ENCODE measurements at regions of chr12 and their contacts with region 1.

Region 1: GRCh38 chr12:123365025-123365917 is 624 bp upstream of the SBNO1 start:
- DNase-seq: peak; percentile 99
- H3K4me3 Mint-ChIP-seq: peak overlapping the region; percentile 90
- H3K27ac Mint-ChIP-seq: peak overlapping the region; percentile 99
- H3K4me1 Mint-ChIP-seq: peaks cover 14% of the 10 kb centered on the region
- H3K27me3 Mint-ChIP-seq: no peaks in the 10 kb centered on the region

Region 2: DNA sequence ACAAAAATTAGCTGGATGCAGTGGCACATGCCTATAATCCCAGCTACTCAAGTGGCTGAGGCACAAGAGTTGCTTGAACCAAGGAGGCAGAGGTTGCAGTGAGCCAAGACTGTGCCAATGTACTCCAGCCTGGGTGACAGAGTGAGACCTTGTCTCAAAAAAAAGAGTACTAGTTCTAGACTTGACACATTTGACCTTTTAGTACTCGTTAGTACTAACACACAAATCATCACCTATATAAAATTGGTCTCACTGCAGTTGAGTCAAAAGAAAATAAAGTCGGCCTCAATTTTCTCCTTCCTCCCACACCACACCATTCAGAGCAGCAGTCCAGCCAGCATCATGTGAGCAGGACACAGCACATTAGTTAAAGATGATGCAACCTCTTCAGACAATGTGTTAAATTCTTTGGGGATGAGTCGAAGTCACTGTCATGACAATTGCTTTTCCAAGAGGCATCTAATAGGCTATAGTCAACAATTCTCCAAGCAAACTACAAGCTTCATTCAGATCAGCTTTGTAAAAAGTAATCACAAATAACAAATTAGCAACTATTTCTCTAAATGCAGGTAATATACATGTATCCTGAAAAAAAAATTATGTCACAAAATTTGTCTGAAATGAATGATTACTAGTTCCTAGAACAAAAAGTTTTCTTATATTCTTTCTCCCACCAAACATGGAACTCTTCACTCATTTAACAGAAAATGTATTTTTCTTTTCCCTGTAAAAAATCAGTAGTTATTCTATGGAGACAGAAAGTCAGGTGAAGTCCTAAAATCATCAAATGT is 998.4 kb before region 1 on chr12:
- intact Hi-C with region 1: no loop called
- DNase-seq: no peak
- H3K4me3 Mint-ChIP-seq: no peak overlapping the region
- H3K27ac Mint-ChIP-seq: peak overlapping the region; percentile 46
- H3K4me1 Mint-ChIP-seq: peaks cover 18% of the 10 kb centered on the region
- H3K27me3 Mint-ChIP-seq: no peaks in the 10 kb centered on the region

Region 3: DNA sequence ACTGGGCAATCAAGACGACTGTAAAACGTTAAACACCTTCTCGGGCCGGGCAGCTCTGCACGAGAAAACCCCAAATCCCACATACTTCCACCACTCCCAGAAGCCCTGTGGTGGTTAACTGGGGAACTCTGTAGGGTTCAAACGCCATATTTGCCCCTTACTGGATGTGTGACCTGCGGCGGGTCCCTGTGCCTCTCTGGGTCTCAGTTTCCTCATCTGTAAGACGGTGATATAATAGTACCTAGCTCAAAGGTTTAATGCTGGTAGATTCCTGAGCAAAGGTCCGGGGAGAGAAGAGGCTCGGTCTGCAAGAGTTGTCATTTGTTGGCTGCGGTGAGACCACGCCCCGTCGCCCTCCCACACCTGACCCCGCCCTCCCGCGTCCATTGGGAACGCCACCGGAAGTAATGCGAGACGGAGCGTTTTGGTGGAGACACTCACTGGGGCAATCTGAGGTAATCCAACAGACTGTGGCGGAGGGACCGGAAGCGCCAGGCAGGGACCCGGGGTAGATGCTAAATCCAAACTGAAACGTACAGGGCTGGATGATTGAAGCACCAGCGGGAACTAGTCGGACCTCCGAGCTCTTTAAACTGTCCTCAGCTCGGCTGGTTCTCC is 390.9 kb before region 1 on chr12:
- intact Hi-C with region 1: loop called (anchors 10 kb)
- DNase-seq: peak; percentile 100
- H3K4me3 Mint-ChIP-seq: peak overlapping the region; percentile 94
- H3K27ac Mint-ChIP-seq: peak overlapping the region; percentile 99
- H3K4me1 Mint-ChIP-seq: peaks cover 19% of the 10 kb centered on the region
- H3K27me3 Mint-ChIP-seq: no peaks in the 10 kb centered on the region

Region 4: GRCh38 chr12:123232807-123233543 is 132.3 kb before region 1 on chr12 and contains the starts of genes MPHOSPH9 and MTRFR:
- intact Hi-C with region 1: loop called (anchors 2 kb)
- DNase-seq: peak; percentile 100
- H3K4me3 Mint-ChIP-seq: peak within 1 kb of the TSS; percentile 95
- H3K27ac Mint-ChIP-seq: peak within 1 kb of the TSS; percentile 99
- H3K4me1 Mint-ChIP-seq: peaks cover 48% of the 10 kb centered on the region
- H3K27me3 Mint-ChIP-seq: peaks cover 3% of the 10 kb centered on the region
- total RNA-seq, gene MPHOSPH9: 87.1 and 90.3 TPM in 2 replicates
- total RNA-seq, gene MTRFR: 30.3 and 30.5 TPM in 2 replicates

Region 5: GRCh38 chr12:123329799-123330198 is 35.5 kb before region 1 on chr12:
- intact Hi-C with region 1: no loop called
- DNase-seq: no peak
- H3K4me3 Mint-ChIP-seq: no peak overlapping the region
- H3K27ac Mint-ChIP-seq: no peak overlapping the region
- H3K4me1 Mint-ChIP-seq: no peaks in the 10 kb centered on the region
- H3K27me3 Mint-ChIP-seq: no peaks in the 10 kb centered on the region

Region 6: DNA sequence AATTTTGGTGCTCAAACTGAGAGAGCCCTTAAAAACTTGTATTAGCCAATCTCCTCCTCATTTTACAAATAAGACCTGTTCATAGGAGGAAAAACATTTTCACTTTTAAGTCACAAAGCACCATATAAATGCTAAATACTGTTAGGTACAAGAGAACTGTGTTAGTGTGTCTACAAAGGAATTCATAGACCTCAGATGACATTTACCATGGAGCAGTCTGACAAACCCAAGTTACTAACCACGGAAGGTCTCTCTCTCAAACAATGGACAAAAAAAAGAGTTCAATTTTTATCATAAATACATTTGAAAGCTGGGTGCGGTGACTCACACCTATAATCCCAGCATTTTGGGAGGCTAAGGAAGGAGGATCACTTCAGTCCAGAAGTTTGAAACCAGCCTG is 10.7 kb before region 1 on chr12:
- intact Hi-C with region 1: no loop called
- DNase-seq: no peak
- H3K4me3 Mint-ChIP-seq: no peak overlapping the region
- H3K27ac Mint-ChIP-seq: peak overlapping the region; percentile 13
- H3K4me1 Mint-ChIP-seq: peaks cover 40% of the 10 kb centered on the region
- H3K27me3 Mint-ChIP-seq: no peaks in the 10 kb centered on the region

Region 7: GRCh38 chr12:123388177-123388947 is 23.1 kb after region 1 on chr12:
- intact Hi-C with region 1: loop called (anchors 1 kb)
- DNase-seq: peak; percentile 95
- H3K4me3 Mint-ChIP-seq: peak overlapping the region; percentile 85
- H3K27ac Mint-ChIP-seq: peak overlapping the region; percentile 89
- H3K4me1 Mint-ChIP-seq: peaks cover 35% of the 10 kb centered on the region
- H3K27me3 Mint-ChIP-seq: no peaks in the 10 kb centered on the region

Region 8: DNA sequence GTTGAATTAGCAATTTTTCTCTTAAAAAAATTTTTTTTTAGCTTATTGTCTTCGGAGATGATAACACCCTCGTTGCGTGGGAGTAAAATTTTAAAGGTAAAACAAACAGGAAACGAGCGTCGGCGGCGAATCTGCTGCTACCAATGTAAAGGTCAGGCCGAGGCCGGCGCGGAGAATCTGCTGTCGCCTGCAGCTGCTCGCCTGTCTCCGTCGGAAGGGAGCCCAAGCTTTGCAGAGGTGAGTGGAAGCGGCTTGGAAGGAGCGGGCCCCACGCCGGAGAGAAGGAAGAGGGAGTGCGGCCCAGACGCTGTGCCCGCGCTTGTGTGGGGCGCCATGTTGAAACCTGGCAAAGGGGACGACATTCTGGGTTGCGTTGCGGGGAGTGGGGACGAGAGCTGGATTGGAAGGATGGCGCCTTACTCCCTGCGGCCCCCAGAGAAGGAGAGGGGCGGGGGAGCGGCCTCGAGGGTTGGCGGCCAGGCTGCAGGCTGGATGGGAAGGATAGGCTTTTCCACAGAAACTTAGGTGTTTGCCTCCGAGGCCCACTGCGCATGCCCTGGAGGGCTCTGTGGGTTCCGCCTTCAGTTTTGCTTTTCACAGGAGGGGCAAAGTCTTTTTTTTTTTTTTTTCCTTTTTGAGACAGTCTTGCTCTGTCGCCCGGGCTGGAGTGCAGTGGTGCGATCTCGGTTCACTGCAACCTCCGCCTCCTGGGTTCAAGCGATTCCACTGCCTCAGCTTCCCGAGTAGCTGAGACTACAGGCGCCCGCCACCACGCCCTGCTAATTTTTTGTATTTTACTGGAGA is 92.9 kb after region 1 on chr12 and contains the start of gene SNRNP35:
- intact Hi-C with region 1: loop called (anchors 1 kb)
- DNase-seq: peak; percentile 95
- H3K4me3 Mint-ChIP-seq: peak within 1 kb of the TSS; percentile 100
- H3K27ac Mint-ChIP-seq: peak within 1 kb of the TSS; percentile 100
- H3K4me1 Mint-ChIP-seq: peaks cover 22% of the 10 kb centered on the region
- H3K27me3 Mint-ChIP-seq: no peaks in the 10 kb centered on the region
- total RNA-seq, gene SNRNP35: 30.6 and 33.4 TPM in 2 replicates

Region 9: GRCh38 chr12:123713398-123713797 is 348.1 kb after region 1 on chr12:
- intact Hi-C with region 1: loop called (anchors 10 kb)
- DNase-seq: peak; percentile 74
- H3K4me3 Mint-ChIP-seq: peak overlapping the region; percentile 98
- H3K27ac Mint-ChIP-seq: peak overlapping the region; percentile 93
- H3K4me1 Mint-ChIP-seq: peaks cover 36% of the 10 kb centered on the region
- H3K27me3 Mint-ChIP-seq: no peaks in the 10 kb centered on the region

Region 10: GRCh38 chr12:123731596-123731995 is 366.3 kb after region 1 on chr12:
- intact Hi-C with region 1: no loop called
- DNase-seq: no peak
- H3K4me3 Mint-ChIP-seq: no peak overlapping the region
- H3K27ac Mint-ChIP-seq: peak overlapping the region; percentile 42
- H3K4me1 Mint-ChIP-seq: peaks cover 18% of the 10 kb centered on the region
- H3K27me3 Mint-ChIP-seq: no peaks in the 10 kb centered on the region